Activated naive CD4-positive, alpha-beta T cell treated with anti-CD3 and anti-CD28 coated beads for 36 hours (primary cell): ENCODE measurements at regions of chr4 and their contacts with region 1.

Region 1: DNA sequence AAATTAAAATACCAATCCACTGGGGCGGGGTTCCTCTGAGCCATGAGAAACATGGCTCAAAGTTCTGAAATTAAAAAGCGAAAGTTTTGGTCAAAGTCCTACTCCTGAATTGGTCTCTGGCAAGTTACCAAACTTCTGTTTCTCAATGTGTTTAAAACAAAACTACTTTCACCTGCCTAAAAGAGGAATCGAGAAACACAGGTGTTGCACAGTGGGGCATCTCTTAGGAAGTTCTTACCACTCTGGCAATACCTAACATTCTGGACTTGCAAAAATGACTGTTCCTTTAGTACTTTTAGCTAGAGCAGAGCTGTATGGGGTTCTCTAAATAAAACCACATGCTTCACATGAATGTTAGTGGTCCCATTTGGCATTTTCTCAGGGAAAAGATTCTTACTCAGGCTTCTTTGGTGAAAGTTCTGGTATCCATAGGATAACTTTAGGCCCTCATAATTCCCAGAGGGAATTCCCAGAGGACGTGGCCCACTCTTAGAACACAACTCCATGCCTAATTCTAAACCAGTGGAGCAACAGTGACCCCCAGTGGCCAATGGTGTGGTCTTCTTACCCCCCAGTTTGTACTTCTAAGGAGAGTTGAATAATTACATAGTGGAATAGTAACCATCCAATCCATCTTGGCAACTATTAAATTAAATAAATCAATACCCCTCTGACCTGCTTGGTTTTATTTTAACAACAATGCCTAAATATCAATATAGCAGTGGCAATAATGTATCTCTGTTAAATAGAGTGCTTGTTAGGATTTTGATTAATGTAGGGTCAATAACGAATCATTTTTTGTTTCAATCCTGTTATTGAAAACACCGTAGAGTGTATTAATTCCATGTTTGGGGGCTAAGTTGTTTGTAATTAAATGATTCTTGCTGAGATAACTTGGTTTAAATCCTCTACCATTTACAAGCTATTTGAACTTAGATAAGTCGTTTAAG is 21.9 kb downstream of the BMP3 start:
- DNase-seq: peak; percentile 64
- H3K4me3 Mint-ChIP-seq: no peak overlapping the region
- H3K27ac Mint-ChIP-seq: no peak overlapping the region
- H3K4me1 Mint-ChIP-seq: no peaks in the 10 kb centered on the region
- H3K27me3 Mint-ChIP-seq: no peaks in the 10 kb centered on the region

Region 2: GRCh38 chr4:80221161-80221560 is 831.2 kb before region 1 on chr4:
- CTCF ChIA-PET with region 1: interaction called, 3 read pairs
- intact Hi-C with region 1: loop called (anchors 10 kb)
- DNase-seq: no peak
- H3K4me3 Mint-ChIP-seq: no peak overlapping the region
- H3K27ac Mint-ChIP-seq: no peak overlapping the region
- H3K4me1 Mint-ChIP-seq: no peaks in the 10 kb centered on the region
- H3K27me3 Mint-ChIP-seq: peaks cover 10% of the 10 kb centered on the region

Region 3: DNA sequence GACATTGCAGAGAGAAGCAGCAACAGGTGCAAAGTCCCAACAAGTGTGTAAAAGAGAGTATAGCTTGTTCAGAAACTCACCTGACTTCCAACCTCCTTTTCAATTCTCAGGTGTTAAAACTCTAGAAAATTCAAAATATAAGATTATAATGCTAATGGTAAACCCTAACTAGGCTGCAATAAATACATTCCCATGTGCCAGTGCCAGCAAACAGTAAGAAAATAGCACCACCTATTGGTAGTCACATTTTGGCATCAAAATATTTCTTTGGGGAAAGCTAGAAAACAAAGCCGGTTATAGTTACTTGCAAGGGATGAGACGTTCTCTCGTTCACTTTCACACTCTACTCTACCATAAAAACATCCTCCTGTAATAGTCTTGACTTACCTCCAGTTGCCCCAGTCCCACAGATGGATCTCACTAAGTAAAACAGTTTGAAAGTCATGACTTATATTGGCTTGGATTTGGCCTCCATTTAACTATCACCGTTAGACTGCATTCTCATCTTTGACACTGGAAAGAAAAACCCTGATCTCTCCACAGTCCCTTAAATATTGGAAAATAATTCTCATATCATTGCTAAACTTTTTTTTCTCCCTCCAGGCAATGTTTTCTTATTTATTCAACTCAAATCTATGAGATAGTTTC is 12.3 kb before region 1 on chr4:
- CTCF ChIA-PET with region 1: interaction called, 15 read pairs
- intact Hi-C with region 1: no loop called
- DNase-seq: no peak
- H3K4me3 Mint-ChIP-seq: no peak overlapping the region
- H3K27ac Mint-ChIP-seq: no peak overlapping the region
- H3K4me1 Mint-ChIP-seq: no peaks in the 10 kb centered on the region
- H3K27me3 Mint-ChIP-seq: no peaks in the 10 kb centered on the region

Region 4: GRCh38 chr4:81369886-81370285 is 317.5 kb after region 1 on chr4:
- CTCF ChIA-PET with region 1: no interaction called
- intact Hi-C with region 1: no loop called
- DNase-seq: no peak
- H3K4me3 Mint-ChIP-seq: no peak overlapping the region
- H3K27ac Mint-ChIP-seq: no peak overlapping the region
- H3K4me1 Mint-ChIP-seq: no peaks in the 10 kb centered on the region
- H3K27me3 Mint-ChIP-seq: peaks cover 8% of the 10 kb centered on the region